ENCODE measurements at regions of chr1 and their contacts with region 1.

Region 1: GRCh38 chr1:154884869-154885701 is 15.0 kb upstream of the KCNN3 start:
- DNase-seq: no peak
- ATAC-seq: no peak
- H3K4me3 ChIP-seq: no peak overlapping the region
- H3K27ac ChIP-seq: no peak overlapping the region
- H3K4me1 ChIP-seq: peaks cover 6% of the 10 kb centered on the region
- H3K27me3 ChIP-seq: no peaks in the 10 kb centered on the region
- CTCF ChIP-seq: no peak
- EP300 ChIP-seq: no peak
- POLR2A ChIP-seq: no peak
- RAD21 ChIP-seq: no peak

Region 2: DNA sequence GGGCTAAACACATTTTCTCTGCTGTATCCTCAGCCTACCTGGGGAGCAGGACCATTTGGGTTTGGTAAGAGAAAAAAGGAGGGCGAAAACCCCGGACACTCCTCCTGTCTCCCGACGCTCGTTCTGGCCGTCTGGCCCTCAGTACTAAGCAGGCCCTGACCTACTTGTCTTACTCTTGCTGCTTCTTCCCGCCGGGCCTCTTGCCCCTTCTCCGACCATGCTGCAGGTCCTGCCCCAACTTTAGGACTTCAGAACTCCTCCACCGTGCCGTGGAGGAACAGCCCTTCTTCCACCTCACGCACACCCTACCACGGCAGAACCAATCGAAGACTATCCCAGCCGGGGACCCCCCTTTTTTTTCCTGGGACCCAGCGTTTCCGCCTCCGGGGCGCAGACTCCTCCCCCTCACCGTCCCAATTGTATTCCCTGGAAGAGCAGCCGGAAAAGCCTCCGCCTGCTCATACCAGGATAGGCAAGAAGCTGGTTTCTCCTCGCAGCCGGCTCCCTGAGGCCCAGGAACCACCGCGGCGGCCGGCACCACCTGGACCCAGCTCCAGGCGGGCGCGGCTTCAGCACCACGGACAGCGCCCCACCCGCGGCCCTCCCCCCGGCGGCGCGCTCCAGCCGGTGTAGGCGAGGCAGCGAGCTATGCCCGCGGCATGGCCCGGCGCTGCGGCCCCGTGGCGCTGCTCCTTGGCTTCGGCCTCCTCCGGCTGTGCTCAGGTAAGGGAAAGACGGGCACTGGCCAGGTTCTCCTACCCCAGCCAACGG is 317.5 kb before region 1 on chr1 and contains the start of gene CHRNB2:
- CTCF ChIA-PET with region 1: no interaction called
- POLR2A ChIA-PET with region 1: no interaction called
- RAD21 ChIA-PET with region 1: no interaction called
- SMC1A ChIA-PET with region 1: no interaction called
- in situ Hi-C with region 1: loop called (anchors 5 kb)
- intact Hi-C with region 1: no loop called
- DNase-seq: no peak
- ATAC-seq: peak; percentile 98
- H3K4me3 ChIP-seq: no peak within 1 kb of the TSS
- H3K27ac ChIP-seq: no peak within 1 kb of the TSS
- H3K4me1 ChIP-seq: no peaks in the 10 kb centered on the region
- H3K27me3 ChIP-seq: peaks cover 2 to 5% of the 10 kb centered on the region in 2 experiments; a peak in 3 of 4 replicates
- CTCF ChIP-seq: no peak
- EP300 ChIP-seq: no peak
- POLR2A ChIP-seq: no peak
- RAD21 ChIP-seq: no peak
- polyA plus RNA-seq, gene CHRNB2: not detected

Region 3: GRCh38 chr1:154657556-154657955 is 227.5 kb before region 1 on chr1:
- CTCF ChIA-PET with region 1: no interaction called
- POLR2A ChIA-PET with region 1: no interaction called
- RAD21 ChIA-PET with region 1: no interaction called
- SMC1A ChIA-PET with region 1: no interaction called
- in situ Hi-C with region 1: no loop called
- intact Hi-C with region 1: no loop called
- DNase-seq: no peak
- ATAC-seq: no peak
- H3K4me3 ChIP-seq: no peak overlapping the region
- H3K27ac ChIP-seq: no peak overlapping the region
- H3K4me1 ChIP-seq: no peaks in the 10 kb centered on the region
- H3K27me3 ChIP-seq: no peaks in the 10 kb centered on the region; a peak in 1 of 4 replicates
- CTCF ChIP-seq: no peak
- EP300 ChIP-seq: no peak
- POLR2A ChIP-seq: no peak
- RAD21 ChIP-seq: no peak

Region 4: DNA sequence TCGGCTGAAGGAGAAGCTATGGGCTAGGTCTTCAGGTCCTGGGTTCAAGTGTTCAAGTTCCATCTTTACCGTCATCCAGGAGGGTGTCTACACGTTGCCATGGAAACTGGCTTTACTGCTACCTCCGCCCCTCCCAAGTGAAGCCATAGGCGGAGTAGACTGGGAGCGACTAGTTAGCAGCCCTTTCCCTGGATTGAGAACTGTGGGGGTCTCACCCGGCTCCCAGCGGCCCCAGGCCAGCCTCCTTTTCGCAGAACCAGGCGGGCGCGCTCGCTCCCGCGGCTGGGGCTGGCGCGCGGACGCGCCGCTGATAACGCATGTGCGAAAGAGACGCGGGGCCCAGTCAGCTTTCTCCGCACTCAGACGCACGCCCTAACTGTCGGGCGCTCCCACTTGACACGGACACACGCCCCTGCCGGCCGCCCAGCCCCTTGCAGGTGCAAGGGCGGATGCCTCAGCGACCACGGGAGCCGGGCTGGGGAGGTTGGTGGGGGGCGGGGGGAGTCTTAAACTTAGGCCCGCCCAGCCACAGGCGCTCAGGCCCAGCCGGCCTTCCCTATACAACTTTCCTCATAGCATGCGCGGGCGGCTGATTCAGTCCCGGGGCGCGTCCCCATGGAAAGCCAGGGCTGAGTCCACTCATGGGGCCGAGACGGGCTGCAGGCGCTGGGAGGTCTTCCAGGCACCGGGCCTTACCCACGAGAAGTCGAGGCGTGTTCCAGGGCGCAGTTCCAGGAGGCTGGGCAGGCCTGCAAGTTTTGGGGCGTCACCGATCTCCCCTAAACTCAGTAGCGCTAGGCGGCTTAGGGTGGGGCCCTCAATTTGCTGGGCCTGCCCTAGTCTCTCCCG is 185.9 kb after region 1 on chr1:
- CTCF ChIA-PET with region 1: no interaction called
- POLR2A ChIA-PET with region 1: no interaction called
- RAD21 ChIA-PET with region 1: no interaction called
- SMC1A ChIA-PET with region 1: no interaction called
- in situ Hi-C with region 1: no loop called
- intact Hi-C with region 1: no loop called
- DNase-seq: no peak
- ATAC-seq: peak; percentile 99
- H3K4me3 ChIP-seq: peak overlapping the region; percentile 18; the same call in 1 of the 2 replicates
- H3K27ac ChIP-seq: no peak overlapping the region
- H3K4me1 ChIP-seq: peaks cover 10% of the 10 kb centered on the region
- H3K27me3 ChIP-seq: no peaks in the 10 kb centered on the region
- CTCF ChIP-seq: peak; percentile 22 to 65 (median 32); a peak in 5 of 6 replicates
- EP300 ChIP-seq: no peak
- POLR2A ChIP-seq: no peak
- RAD21 ChIP-seq: no peak